ENCODE measurements at regions of chr3 and their contacts with region 1.

Region 1: GRCh38 chr3:105366326-105367062 is at the start of gene ALCAM:
- DNase-seq: peak; percentile 90
- H3K4me3 Mint-ChIP-seq: peak within 1 kb of the TSS; percentile 93
- H3K27ac Mint-ChIP-seq: peak within 1 kb of the TSS; percentile 97
- H3K4me1 Mint-ChIP-seq: peaks cover 32% of the 10 kb centered on the region
- H3K27me3 Mint-ChIP-seq: peaks cover 16% of the 10 kb centered on the region
- total RNA-seq, gene ALCAM: 17.5 to 18.7 TPM

Region 2: DNA sequence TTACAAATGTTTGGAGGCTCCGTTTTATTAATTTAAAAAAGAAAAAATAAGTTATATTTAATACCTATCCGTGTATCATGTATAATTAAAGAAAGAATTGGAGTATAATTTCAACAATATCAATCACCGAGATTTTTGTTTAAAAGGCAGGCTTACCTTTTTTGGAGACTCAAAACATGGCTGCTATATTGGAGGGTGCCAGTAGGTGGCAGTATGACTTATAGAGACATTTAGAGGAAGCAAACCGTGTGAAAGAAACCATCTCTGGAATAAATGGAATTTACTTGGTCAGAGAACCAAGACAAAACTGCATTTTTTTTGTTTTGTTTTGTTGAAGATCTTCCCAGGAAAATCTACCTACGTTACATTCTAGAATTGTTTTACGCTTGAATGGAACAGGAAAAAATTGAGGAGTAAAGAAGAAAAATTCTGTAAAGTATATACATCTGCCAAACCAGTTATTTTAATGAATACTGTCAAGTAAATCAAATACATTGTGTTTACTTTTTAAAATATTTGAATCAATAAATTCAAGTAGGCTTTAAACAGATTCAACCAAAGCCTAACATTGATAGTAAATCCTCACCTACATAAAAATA is 802.4 kb before region 1 on chr3:
- CTCF ChIA-PET with region 1: no interaction called
- intact Hi-C with region 1: loop called (anchors 1 kb)
- DNase-seq: peak; percentile 84
- H3K4me3 Mint-ChIP-seq: no peak overlapping the region
- H3K27ac Mint-ChIP-seq: no peak overlapping the region
- H3K4me1 Mint-ChIP-seq: no peaks in the 10 kb centered on the region
- H3K27me3 Mint-ChIP-seq: peaks cover 8% of the 10 kb centered on the region

Region 3: GRCh38 chr3:105518806-105519418 is 152.4 kb after region 1 on chr3:
- CTCF ChIA-PET with region 1: interaction called, 5 read pairs
- intact Hi-C with region 1: loop called (anchors 1 kb)
- DNase-seq: peak; percentile 30
- H3K4me3 Mint-ChIP-seq: no peak overlapping the region
- H3K27ac Mint-ChIP-seq: no peak overlapping the region
- H3K4me1 Mint-ChIP-seq: no peaks in the 10 kb centered on the region
- H3K27me3 Mint-ChIP-seq: no peaks in the 10 kb centered on the region

Region 4: GRCh38 chr3:105868742-105869530 is 502.4 kb after region 1 on chr3 and contains the start of gene CBLB:
- CTCF ChIA-PET with region 1: no interaction called
- intact Hi-C with region 1: loop called (anchors 1 kb)
- DNase-seq: peak; percentile 90
- H3K4me3 Mint-ChIP-seq: peak within 1 kb of the TSS; percentile 94
- H3K27ac Mint-ChIP-seq: peak within 1 kb of the TSS; percentile 93
- H3K4me1 Mint-ChIP-seq: peaks cover 29% of the 10 kb centered on the region
- H3K27me3 Mint-ChIP-seq: no peaks in the 10 kb centered on the region
- total RNA-seq, gene CBLB: 72.8 to 78.9 TPM

Region 5: DNA sequence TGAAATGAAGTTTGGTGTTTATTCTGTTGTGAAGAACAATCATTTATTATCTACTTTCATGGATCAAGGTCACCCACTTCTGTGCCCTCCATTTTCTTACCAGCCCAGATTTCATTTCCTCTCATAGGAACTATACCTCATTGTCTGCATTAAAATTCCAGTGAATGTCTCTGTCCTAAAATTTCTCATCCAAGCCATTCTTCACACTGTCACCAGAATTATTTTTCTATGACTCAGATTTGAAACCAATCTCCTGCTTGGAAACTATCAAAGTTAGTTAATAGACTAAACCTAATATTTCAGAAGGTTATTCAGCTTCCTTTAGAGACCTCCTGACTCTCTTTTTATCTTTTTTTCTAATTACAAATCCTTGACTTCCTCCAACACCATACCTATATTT is 866.5 kb after region 1 on chr3:
- CTCF ChIA-PET with region 1: no interaction called
- intact Hi-C with region 1: loop called (anchors 1 kb)
- DNase-seq: no peak
- H3K4me3 Mint-ChIP-seq: no peak overlapping the region
- H3K27ac Mint-ChIP-seq: peak overlapping the region; percentile 86
- H3K4me1 Mint-ChIP-seq: peaks cover 56% of the 10 kb centered on the region
- H3K27me3 Mint-ChIP-seq: no peaks in the 10 kb centered on the region

Region 6: GRCh38 chr3:106609666-106610301 is 1243.3 kb after region 1 on chr3:
- CTCF ChIA-PET with region 1: no interaction called
- intact Hi-C with region 1: loop called (anchors 1 kb)
- DNase-seq: peak; percentile 82
- H3K4me3 Mint-ChIP-seq: no peak overlapping the region
- H3K27ac Mint-ChIP-seq: no peak overlapping the region
- H3K4me1 Mint-ChIP-seq: peaks cover 21% of the 10 kb centered on the region
- H3K27me3 Mint-ChIP-seq: no peaks in the 10 kb centered on the region